ENCODE measurements at regions of chrX and their contacts with region 1.

Region 1: DNA sequence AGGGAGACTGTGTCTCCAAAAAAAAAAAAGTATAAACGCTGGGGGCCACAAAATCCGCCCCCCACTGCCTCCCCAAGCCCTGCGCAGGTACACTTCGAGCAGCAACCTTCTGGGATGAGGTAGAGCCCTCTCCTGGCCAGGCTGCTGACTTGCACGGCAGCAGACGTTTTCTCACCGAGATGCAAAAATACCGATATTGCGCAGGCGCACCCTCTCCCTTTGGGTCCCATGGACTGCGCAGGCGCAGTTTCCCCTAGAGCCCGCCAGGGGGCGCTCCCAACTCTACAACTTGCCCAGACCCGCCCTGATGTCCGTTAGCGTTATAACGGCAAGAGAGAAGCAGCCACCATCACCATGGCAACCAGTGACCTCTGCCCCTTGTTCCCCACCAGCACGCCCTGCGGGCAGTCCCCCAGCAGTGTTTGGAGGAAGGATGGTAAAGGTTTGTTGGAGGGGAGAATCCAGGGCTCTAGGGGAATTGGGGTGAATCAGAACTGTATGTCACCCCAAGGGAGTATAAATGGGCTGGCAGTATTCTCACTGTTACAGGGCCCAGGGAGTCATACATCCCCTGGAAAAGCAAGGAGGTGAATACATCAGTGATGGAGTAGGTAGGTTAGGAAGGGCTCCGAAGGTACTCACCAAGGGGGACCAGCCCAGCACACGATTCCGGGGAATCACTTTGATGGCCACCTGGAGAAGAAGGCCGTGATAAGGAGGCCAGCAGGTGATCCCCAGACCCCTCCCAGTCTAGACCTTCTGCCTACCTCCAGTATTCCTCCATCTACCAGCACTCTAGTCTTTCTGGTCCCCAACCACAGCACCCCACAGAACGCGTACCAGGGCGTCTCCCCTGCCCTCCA is 1.5 kb downstream of the PIM2 start:
- DNase-seq: peak; percentile 85 to 92 (median 86)
- ATAC-seq: peak; percentile 55 to 79 (median 76)
- H3K4me3 ChIP-seq: peak overlapping the region in 7 of 12 donors; percentile 15 to 74 (median 33)
- H3K27ac ChIP-seq: peak overlapping the region in 2 of 12 donors; percentile 52 to 85
- H3K4me1 ChIP-seq: peaks cover 0 to 18% (median 2%) of the 10 kb centered on the region in 12 donors
- H3K27me3 ChIP-seq: no peaks in the 10 kb centered on the region
- CTCF ChIP-seq: peak; percentile 81 to 96 (median 93)
- POLR2A ChIP-seq: no peak

Region 2: GRCh38 chrX:48648336-48648751 is 269.0 kb before region 1 on chrX:
- intact Hi-C with region 1: loop called in 1 of 10 experiments (anchors 10 kb)
- DNase-seq: peak in 4 of 5 donors; percentile 6 to 51 (median 30)
- ATAC-seq: peak in 3 of 4 donors; percentile 76 to 83 (median 81)
- H3K4me3 ChIP-seq: no peak overlapping the region
- H3K27ac ChIP-seq: peak overlapping the region in 2 of 12 donors; percentile 9 to 45
- H3K4me1 ChIP-seq: peaks cover 0 to 4% (median 0%) of the 10 kb centered on the region in 12 donors
- H3K27me3 ChIP-seq: peaks cover 0 to 12% (median 0%) of the 10 kb centered on the region in 9 donors
- CTCF ChIP-seq: peak in 10 of 12 donors; percentile 27 to 52 (median 38)
- POLR2A ChIP-seq: no peak

Region 3: GRCh38 chrX:48676106-48676892 is 241.1 kb before region 1 on chrX:
- intact Hi-C with region 1: loop called in 1 of 10 experiments (anchors 10 kb)
- DNase-seq: peak; percentile 89 to 95 (median 92)
- ATAC-seq: peak; percentile 99 to 100 (median 100)
- H3K4me3 ChIP-seq: peak overlapping the region; percentile 41 to 95 (median 76)
- H3K27ac ChIP-seq: peak overlapping the region; percentile 47 to 93 (median 87)
- H3K4me1 ChIP-seq: peaks cover 0 to 9% (median 0%) of the 10 kb centered on the region in 12 donors
- H3K27me3 ChIP-seq: no peaks in the 10 kb centered on the region
- CTCF ChIP-seq: peak in 1 of 12 donors; percentile 9
- POLR2A ChIP-seq: peak in 1 of 2 donors; percentile 72

Region 4: GRCh38 chrX:48897621-48898306 is 19.6 kb before region 1 on chrX and contains the starts of genes PQBP1 and TIMM17B:
- intact Hi-C with region 1: loop called in 1 of 10 experiments (anchors 2 kb)
- DNase-seq: peak; percentile 90 to 94 (median 92)
- ATAC-seq: peak; percentile 95 to 98 (median 96)
- H3K4me3 ChIP-seq: peak within 1 kb of the TSS; percentile 33 to 88 (median 77)
- H3K27ac ChIP-seq: peak within 1 kb of the TSS; percentile 89 to 97 (median 94)
- H3K4me1 ChIP-seq: peaks cover 0 to 20% (median 10%) of the 10 kb centered on the region in 12 donors
- H3K27me3 ChIP-seq: peaks cover 0 to 3% (median 0%) of the 10 kb centered on the region in 9 donors
- CTCF ChIP-seq: no peak
- POLR2A ChIP-seq: peak in 1 of 2 donors; percentile 86
- total RNA-seq, gene PQBP1: 45.3 to 67.0 (median 52.9) TPM
- total RNA-seq, gene TIMM17B: 57.1 to 86.9 (median 71.0) TPM